ENCODE measurements at regions of chr22 and their contacts with region 1.

Region 1: DNA sequence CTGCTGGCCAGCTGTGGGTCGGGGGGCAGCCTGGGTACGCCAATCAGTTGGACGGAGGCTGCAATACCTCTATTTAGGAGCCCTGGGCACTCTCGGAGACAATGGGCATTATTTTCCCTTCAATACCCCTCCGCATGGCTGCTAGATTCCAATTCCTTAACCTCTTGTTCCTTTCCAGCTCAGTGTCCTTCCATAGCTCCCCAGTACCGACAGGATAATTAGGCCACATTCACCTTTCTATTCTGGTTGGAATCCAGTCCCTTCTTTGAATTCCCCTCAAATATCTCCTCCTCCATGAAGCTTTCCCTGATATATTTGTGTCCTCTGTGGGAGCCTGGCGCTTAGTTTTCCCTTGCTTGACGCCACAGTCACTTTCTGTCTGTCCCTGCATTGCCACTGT is 4.2 kb upstream of the BIK start:
- DNase-seq: no peak
- H3K4me3 ChIP-seq: no peak overlapping the region
- H3K27ac ChIP-seq: no peak overlapping the region
- H3K4me1 ChIP-seq: no peaks in the 10 kb centered on the region
- H3K27me3 ChIP-seq: peaks cover 6% of the 10 kb centered on the region
- CTCF ChIP-seq: no peak

Region 2: GRCh38 chr22:42934338-42934737 is 172.0 kb before region 1 on chr22:
- CTCF ChIA-PET with region 1: no interaction called
- POLR2A ChIA-PET with region 1: interaction called, 12 read pairs
- intact Hi-C with region 1: no loop called
- DNase-seq: no peak
- H3K4me3 ChIP-seq: no peak overlapping the region
- H3K27ac ChIP-seq: no peak overlapping the region
- H3K4me1 ChIP-seq: peaks cover 5% of the 10 kb centered on the region
- H3K27me3 ChIP-seq: no peaks in the 10 kb centered on the region
- CTCF ChIP-seq: no peak

Region 3: GRCh38 chr22:42947211-42947990 is 158.9 kb before region 1 on chr22:
- CTCF ChIA-PET with region 1: no interaction called
- POLR2A ChIA-PET with region 1: no interaction called
- intact Hi-C with region 1: no loop called
- DNase-seq: no peak
- H3K4me3 ChIP-seq: no peak overlapping the region
- H3K27ac ChIP-seq: no peak overlapping the region
- H3K4me1 ChIP-seq: peaks cover 36% of the 10 kb centered on the region
- H3K27me3 ChIP-seq: no peaks in the 10 kb centered on the region
- CTCF ChIP-seq: no peak